ENCODE measurements at regions of chr3 and their contacts with region 1.

Region 1: GRCh38 chr3:49723628-49724551 is at the start of gene GMPPB:
- DNase-seq: peak; percentile 97
- H3K4me3 ChIP-seq: peak within 1 kb of the TSS; percentile 92 to 96
- H3K27ac ChIP-seq: peak within 1 kb of the TSS; percentile 97 to 98
- H3K4me1 ChIP-seq: peaks cover 17% of the 10 kb centered on the region
- H3K27me3 ChIP-seq: no peaks in the 10 kb centered on the region
- CTCF ChIP-seq: no peak
- POLR2A ChIP-seq: peak; percentile 66
- total RNA-seq, gene GMPPB: 28.8 to 60.1 TPM

Region 2: DNA sequence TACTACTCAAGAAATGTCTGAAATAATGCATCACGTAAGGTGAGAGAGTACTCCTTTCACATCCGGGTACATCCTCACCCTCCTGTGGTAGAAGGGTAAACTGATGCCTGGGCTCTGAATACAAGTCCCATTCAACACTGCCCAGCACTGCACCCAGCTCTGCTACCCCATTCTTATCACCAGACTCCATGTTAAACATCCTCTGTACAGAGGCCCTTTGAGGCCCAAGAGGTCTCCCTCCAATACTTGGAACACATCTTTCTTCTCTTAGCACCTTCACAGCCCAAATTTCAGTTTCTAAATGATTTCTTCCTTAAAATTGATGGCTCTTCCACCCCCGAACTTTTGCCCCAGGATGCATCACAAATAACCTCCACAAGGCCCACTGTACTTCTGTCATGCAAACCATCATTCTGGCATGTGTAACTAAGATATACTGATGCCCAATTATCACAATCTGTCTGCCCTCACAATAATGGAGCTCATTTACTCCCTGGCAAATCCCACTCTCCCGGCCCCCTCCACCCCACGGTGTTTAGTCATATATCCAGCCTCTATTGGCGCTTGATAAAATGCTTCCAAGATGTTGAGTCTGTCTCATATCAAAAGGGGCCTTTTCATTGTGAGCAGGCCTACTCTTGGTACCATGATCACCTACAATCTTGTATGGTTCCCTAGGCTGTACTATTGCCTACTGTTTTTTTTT is 353.2 kb before region 1 on chr3:
- intact Hi-C with region 1: no loop called
- DNase-seq: no peak
- H3K4me3 ChIP-seq: no peak overlapping the region
- H3K27ac ChIP-seq: no peak overlapping the region
- H3K4me1 ChIP-seq: no peaks in the 10 kb centered on the region
- H3K27me3 ChIP-seq: no peaks in the 10 kb centered on the region
- CTCF ChIP-seq: no peak
- POLR2A ChIP-seq: no peak

Region 3: GRCh38 chr3:49786241-49786958 is 62.5 kb after region 1 on chr3 and contains the start of gene IP6K1:
- intact Hi-C with region 1: loop called (anchors 5 kb)
- DNase-seq: peak; percentile 100
- H3K4me3 ChIP-seq: peak within 1 kb of the TSS; percentile 89 to 90
- H3K27ac ChIP-seq: peak within 1 kb of the TSS; percentile 96 to 98
- H3K4me1 ChIP-seq: peaks cover 4% of the 10 kb centered on the region
- H3K27me3 ChIP-seq: no peaks in the 10 kb centered on the region
- CTCF ChIP-seq: peak in 3 of 4 experiments; percentile 7 to 46 (median 32)
- POLR2A ChIP-seq: peak; percentile 75
- total RNA-seq, gene IP6K1: 46.5 to 119 TPM

Measured in prostate gland (tissue), 2 donors.